ENCODE measurements at regions of chr19 and their contacts with region 1.

Region 1: GRCh38 chr19:12440541-12441316 is at the start of gene ZNF443:
- DNase-seq: peak; percentile 100
- H3K4me3 Mint-ChIP-seq: peak within 1 kb of the TSS; percentile 100
- H3K27ac Mint-ChIP-seq: peak within 1 kb of the TSS; percentile 96
- H3K4me1 Mint-ChIP-seq: peaks cover 6% of the 10 kb centered on the region
- H3K27me3 Mint-ChIP-seq: no peaks in the 10 kb centered on the region
- total RNA-seq, gene ZNF443: 3.7 to 4.1 TPM

Region 2: GRCh38 chr19:12294249-12295158 is 146.2 kb before region 1 on chr19 and contains the start of gene ZNF44:
- CTCF ChIA-PET with region 1: no interaction called
- intact Hi-C with region 1: loop called (anchors 1 kb)
- DNase-seq: peak; percentile 99
- H3K4me3 Mint-ChIP-seq: peak within 1 kb of the TSS; percentile 98
- H3K27ac Mint-ChIP-seq: peak within 1 kb of the TSS; percentile 96
- H3K4me1 Mint-ChIP-seq: peaks cover 31% of the 10 kb centered on the region
- H3K27me3 Mint-ChIP-seq: no peaks in the 10 kb centered on the region
- total RNA-seq, gene ZNF44: 5.9 to 6.3 TPM

Region 3: GRCh38 chr19:12365236-12366162 is 75.2 kb before region 1 on chr19 and contains the start of gene ZNF442:
- CTCF ChIA-PET with region 1: no interaction called
- intact Hi-C with region 1: loop called (anchors 2 kb)
- DNase-seq: peak; percentile 96
- H3K4me3 Mint-ChIP-seq: peak within 1 kb of the TSS; percentile 85
- H3K27ac Mint-ChIP-seq: peak within 1 kb of the TSS; percentile 41
- H3K4me1 Mint-ChIP-seq: peaks cover 18% of the 10 kb centered on the region
- H3K27me3 Mint-ChIP-seq: no peaks in the 10 kb centered on the region
- total RNA-seq, gene ZNF442: 1.7 to 2.4 TPM

Region 4: DNA sequence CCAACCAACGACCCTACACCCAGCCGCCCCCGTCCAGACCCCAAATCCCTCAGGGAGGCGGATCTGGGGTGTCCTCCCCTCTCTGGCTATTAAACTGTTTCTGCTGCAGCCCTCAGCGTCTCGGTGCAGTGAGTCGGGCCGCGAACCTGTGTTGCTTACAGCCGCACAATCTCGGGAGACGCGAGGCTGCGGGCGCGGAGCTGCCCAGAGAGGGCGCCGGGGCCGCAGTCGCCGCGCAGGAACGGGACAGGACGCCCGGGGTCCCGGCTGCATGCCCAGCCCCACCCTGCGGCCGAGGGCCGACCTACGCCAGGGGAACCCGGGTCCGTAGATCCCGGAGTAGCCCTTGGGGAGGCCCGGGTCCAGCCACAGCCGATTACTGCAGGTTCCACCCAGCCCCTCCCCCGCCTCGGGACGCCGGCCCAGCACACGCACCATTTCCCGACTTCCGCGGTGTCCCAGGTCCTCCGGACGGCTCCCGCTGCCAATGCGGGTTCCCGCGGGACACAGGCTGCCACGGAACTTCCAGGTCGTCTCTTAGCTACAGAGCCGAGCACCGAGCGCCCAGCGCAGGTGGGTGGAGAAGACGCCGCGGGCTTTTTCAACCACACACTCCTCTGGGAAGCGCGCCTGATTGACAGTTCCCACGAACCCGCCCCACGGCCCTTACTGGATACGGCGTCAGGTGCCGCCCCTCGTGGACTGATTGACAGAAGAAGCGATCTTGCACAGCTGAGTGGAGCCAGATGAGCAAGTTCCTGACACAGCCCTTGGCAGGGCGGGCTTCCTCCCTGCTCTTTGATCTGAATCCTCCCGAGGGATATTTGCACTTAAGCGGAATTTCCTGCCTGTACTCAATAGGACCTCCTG is 39.9 kb before region 1 on chr19 and contains the start of gene ZNF799:
- CTCF ChIA-PET with region 1: no interaction called
- intact Hi-C with region 1: loop called (anchors 2 kb)
- DNase-seq: peak; percentile 93
- H3K4me3 Mint-ChIP-seq: peak within 1 kb of the TSS; percentile 89
- H3K27ac Mint-ChIP-seq: peak within 1 kb of the TSS; percentile 56
- H3K4me1 Mint-ChIP-seq: peaks cover 8% of the 10 kb centered on the region
- H3K27me3 Mint-ChIP-seq: no peaks in the 10 kb centered on the region
- total RNA-seq, gene ZNF799: 3.3 to 3.6 TPM

Region 5: DNA sequence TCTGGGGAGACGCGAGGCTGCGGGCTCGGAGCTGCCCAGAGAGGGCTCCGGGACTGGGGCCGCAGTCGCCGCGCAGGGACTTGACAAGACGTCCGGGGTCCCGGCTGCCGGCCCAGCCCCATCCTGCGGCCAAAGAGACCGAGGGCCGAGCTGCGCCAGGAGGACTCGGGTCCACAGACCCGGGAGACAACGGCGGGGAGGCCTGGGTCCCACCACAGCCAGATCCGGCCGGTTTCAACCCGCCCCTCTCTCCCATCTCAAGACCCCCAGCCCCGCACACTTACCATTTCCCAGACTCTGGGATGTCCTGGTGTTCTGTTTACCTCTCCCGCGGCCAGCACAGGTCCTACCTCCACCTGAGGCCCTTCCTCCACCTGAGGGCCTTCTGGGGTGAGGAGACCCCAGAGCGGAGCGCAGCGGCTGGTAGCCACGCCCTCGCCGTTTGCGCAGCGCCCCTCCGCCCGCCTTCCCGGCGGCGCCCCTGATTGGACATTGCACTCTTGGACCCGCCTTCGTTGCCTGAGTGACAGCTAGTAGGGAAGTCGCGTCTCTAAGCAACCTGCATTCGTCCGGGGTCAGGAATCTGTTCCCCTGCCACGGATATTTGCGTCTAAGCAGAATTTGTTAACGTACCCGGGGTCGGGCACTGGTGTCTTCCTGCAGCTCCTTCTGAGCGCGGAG is 43.8 kb after region 1 on chr19 and contains the start of gene ZNF709:
- CTCF ChIA-PET with region 1: no interaction called
- intact Hi-C with region 1: loop called (anchors 2 kb)
- DNase-seq: peak; percentile 90
- H3K4me3 Mint-ChIP-seq: peak within 1 kb of the TSS; percentile 92
- H3K27ac Mint-ChIP-seq: peak within 1 kb of the TSS; percentile 30
- H3K4me1 Mint-ChIP-seq: peaks cover 30% of the 10 kb centered on the region
- H3K27me3 Mint-ChIP-seq: no peaks in the 10 kb centered on the region
- total RNA-seq, gene ZNF709: 1.9 to 2.4 TPM

Measured in activated naive CD4-positive, alpha-beta T cell treated with anti-CD3 and anti-CD28 coated beads for 36 hours (primary cell).